ENCODE measurements at regions of chr22 and their contacts with region 1.

Region 1: GRCh38 chr22:19756288-19757128 is 4.1 kb upstream of the TBX1 start:
- DNase-seq: peak; percentile 70
- ATAC-seq: peak; percentile 5
- H3K4me3 Mint-ChIP-seq: peak overlapping the region; percentile 29; the same call in 1 of the 2 replicates
- H3K27ac Mint-ChIP-seq: no peak overlapping the region
- H3K4me1 Mint-ChIP-seq: peaks cover 24% of the 10 kb centered on the region
- H3K27me3 Mint-ChIP-seq: peaks cover 89% of the 10 kb centered on the region
- CTCF ChIP-seq: 0 out of 2 replicates have a peak, but pooled peaks have one; percentile 17

Region 2: GRCh38 chr22:19723983-19724827 is 32.3 kb before region 1 on chr22:
- CTCF ChIA-PET with region 1: interaction called, 16 read pairs
- POLR2A ChIA-PET with region 1: no interaction called
- DNase-seq: peak; percentile 76
- ATAC-seq: peak; percentile 68
- H3K4me3 Mint-ChIP-seq: peak overlapping the region; percentile 53
- H3K27ac Mint-ChIP-seq: no peak overlapping the region
- H3K4me1 Mint-ChIP-seq: peaks cover 20% of the 10 kb centered on the region
- H3K27me3 Mint-ChIP-seq: peaks cover 95% of the 10 kb centered on the region
- CTCF ChIP-seq: peak; percentile 27; the same call in 1 of the 2 replicates

Region 3: GRCh38 chr22:19745155-19746101 is 11.1 kb before region 1 on chr22:
- CTCF ChIA-PET with region 1: interaction called, 14 read pairs
- POLR2A ChIA-PET with region 1: no interaction called
- DNase-seq: no peak
- ATAC-seq: peak; percentile 25; the same call in 1 of the 2 replicates
- H3K4me3 Mint-ChIP-seq: no peak overlapping the region
- H3K27ac Mint-ChIP-seq: no peak overlapping the region
- H3K4me1 Mint-ChIP-seq: 0 out of 2 replicates have a peak, but pooled peaks cover 2% of the 10 kb centered on the region
- H3K27me3 Mint-ChIP-seq: no peaks in the 10 kb centered on the region; the same call in 1 of the 2 replicates
- CTCF ChIP-seq: no peak

Region 4: GRCh38 chr22:19766511-19767426 is 10.3 kb after region 1 on chr22:
- CTCF ChIA-PET with region 1: interaction called, 44 read pairs
- POLR2A ChIA-PET with region 1: interaction called, 3 read pairs
- DNase-seq: peak; percentile 73
- ATAC-seq: peak; percentile 21
- H3K4me3 Mint-ChIP-seq: peak overlapping the region; percentile 44
- H3K27ac Mint-ChIP-seq: no peak overlapping the region
- H3K4me1 Mint-ChIP-seq: peaks cover 27% of the 10 kb centered on the region
- H3K27me3 Mint-ChIP-seq: peaks cover 90% of the 10 kb centered on the region
- CTCF ChIP-seq: peak; percentile 30

Region 5: DNA sequence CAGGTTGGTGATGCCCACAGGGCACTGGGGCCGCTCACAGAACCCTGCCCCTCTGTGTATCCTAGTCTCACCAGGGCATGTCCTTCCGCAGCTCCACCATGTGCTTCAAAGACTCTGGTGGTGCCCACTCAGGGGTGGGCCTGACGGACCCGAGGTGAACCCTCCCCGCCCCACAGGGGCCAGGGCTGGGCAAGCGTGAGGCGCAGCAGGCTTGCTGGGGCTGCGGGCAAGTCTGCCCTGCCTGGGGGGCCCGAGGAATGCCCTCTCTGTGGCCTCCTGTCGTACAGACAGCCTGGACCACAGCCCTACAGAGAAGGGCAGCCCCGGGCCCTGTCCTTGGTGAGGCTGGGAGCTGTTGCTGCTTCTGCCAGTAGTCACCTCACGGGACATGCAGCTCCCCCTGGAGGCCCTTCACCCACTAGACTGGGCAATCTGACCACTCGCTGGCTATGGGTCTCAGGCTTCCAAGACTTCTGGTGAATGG is 44.3 kb after region 1 on chr22:
- CTCF ChIA-PET with region 1: interaction called, 21 read pairs
- POLR2A ChIA-PET with region 1: no interaction called
- DNase-seq: peak; percentile 58
- ATAC-seq: peak; percentile 71
- H3K4me3 Mint-ChIP-seq: no peak overlapping the region
- H3K27ac Mint-ChIP-seq: no peak overlapping the region
- H3K4me1 Mint-ChIP-seq: no peaks in the 10 kb centered on the region
- H3K27me3 Mint-ChIP-seq: no peaks in the 10 kb centered on the region
- CTCF ChIP-seq: no peak

Region 6: GRCh38 chr22:19965771-19966709 is 209.5 kb after region 1 on chr22:
- CTCF ChIA-PET with region 1: no interaction called
- POLR2A ChIA-PET with region 1: no interaction called
- DNase-seq: peak; percentile 68
- ATAC-seq: peak; percentile 25
- H3K4me3 Mint-ChIP-seq: no peak overlapping the region
- H3K27ac Mint-ChIP-seq: no peak overlapping the region
- H3K4me1 Mint-ChIP-seq: peaks cover 22% of the 10 kb centered on the region
- H3K27me3 Mint-ChIP-seq: no peaks in the 10 kb centered on the region; the same call in 1 of the 2 replicates
- CTCF ChIP-seq: peak; percentile 51; the same call in 1 of the 2 replicates